ENCODE measurements at regions of chr9 and their contacts with region 1.

Region 1: DNA sequence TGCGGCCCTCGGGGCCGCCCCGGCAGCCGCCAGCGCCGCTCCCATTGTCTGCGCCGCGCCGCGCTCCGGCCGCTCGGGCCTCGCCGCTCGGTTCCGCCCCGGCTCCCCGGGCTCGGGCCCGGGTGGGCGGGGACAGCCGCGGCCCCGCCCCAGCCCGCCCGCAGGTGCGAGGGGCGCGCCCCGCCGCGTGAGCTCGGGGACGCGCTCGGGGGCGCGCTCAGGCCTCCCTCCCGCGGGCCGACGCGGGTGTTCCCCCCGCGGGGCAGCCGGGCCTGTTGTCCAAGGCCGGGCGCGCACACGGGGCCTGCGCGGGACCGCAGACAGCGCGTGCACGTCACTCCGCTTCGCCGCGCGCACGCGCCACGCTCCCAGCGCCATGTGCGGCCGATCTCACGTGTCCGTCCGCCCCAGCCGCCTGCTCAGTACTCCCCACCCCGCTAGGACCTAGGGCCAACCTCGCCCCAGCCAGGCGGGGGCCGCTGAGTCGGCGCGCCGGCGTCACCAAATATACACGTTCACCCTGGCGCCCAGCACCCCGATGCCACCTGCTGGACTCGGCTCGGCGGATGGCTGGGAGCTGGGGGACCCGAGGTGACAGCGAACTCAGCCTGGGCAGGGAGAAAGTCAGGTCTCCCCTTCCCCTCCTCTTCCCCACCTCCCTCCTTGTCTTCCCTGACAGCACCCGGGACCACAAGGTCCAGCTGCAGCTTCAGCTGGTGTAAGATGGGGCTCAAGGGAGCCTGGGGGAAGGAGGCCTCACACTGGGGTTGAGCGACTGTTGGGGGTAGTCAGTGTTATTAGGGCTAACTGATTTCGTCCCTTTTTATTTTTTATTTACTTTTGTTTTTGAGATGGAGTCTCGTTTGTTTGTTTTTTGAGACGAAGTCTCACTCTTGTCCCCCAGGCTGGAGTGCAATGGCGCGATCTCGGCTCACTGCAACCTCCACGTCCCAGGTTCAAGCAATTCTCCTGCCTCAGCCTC is 14.3 kb downstream of the GBGT1 start:
- DNase-seq: peak; percentile 92
- ATAC-seq: peak; percentile 76

Region 2: DNA sequence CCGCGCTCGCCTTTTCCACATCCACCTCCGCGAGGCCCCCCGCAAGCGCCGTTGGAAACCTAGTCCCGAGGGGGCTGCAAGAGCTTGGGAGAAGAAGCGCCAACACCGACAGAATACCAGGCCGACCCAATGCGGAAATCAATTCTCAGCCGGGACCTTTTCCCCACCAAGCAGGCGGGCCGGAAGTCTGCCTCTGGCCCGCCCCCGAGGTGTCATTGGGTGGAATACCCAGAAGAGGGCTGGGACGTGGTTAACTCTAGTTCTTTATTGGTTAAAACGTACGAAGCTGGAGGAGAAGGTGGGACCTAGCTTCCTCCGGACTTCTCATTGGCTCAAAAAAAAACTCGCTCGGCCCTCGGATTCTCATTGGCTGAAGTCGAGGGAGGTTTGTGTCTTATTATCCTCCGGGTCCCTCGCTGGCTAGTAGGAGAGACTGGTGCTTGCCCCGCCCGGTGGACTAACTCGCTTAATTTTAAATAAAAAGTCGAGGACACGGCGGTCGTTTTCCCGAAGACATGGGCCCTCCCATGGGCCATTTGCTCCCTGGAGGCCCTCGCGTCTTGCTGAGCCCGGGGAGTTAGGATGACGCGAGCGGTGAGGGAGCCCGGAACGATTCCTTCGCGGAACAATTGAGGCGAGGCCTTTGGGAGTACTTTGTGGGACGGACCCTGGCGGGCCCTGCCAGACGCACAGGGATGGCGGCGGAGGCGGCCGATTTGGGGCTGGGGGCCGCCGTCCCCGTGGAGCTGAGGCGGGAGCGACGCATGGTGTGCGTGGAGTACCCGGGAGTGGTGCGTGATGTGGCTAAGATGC is 118.9 kb before region 1 on chr9 and contains the start of gene GTF3C5:
- intact Hi-C with region 1: loop called in 1 of 2 experiments (anchors 10 kb)
- DNase-seq: peak; percentile 92 to 93
- ATAC-seq: peak; percentile 95
- total RNA-seq, gene GTF3C5: 39.0 to 44.4 TPM

Region 3: DNA sequence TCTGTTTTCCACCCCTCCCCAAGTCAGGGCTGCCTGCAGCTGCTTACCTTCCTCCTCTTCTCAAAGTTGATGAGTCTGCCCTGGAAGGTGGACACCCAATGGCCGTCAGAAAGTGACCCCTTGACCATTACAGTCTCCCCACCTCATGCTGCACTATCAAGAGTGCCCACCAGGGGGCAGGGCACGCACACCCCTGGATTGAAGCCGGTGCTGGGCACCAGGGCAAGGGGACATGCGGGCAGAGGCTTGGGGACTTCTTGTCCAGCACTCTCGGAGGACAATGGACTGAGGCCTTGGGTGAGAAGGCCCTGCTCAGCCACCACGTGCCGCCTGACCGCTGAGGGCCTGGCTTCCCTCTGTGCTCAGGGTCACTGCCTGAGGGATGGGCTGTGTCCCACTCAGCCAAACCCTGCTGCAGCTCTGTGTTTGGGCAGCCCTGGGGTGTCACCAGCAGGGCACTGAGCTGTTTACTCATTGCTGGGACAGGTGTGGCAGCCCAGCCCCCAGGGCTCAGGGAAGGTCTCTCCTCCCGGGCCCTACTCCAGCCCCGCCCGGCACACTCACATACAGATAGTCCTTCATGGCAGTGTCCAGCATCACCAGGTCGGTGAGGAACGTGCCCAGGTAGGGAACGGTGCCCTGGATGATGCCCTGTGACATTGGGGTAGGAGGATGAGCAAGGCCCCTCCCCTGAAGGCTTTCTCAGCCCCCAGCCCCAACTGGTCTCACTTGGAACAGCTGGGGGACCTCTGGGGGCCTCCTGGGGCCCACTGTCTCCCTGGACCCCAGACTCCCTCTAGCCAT is 46.0 kb before region 1 on chr9:
- intact Hi-C with region 1: loop called (anchors 5 kb)
- DNase-seq: peak; percentile 50 to 71
- ATAC-seq: peak; percentile 83

Measured in left colon (tissue), 2 donors.